Activated T-helper 1 cell treated with anti-CD3 and anti-CD28 coated beads, Interleukin-12 subunit alpha, Interleukin-12 subunit beta, Interleukin-2, Interleukin-4 antibody, amounts not matched to agents 30 ng/mL and 10 ng/mL and 1 ng/mL, durations not matched to agents 14 hours and 24 hours and 36 hours (primary cell): ENCODE measurements at regions of chr20 and their contacts with region 1.

Region 1: GRCh38 chr20:57654363-57654997 is 34.3 kb upstream of the ZBP1 start:
- DNase-seq: peak; percentile 23
- H3K4me3 Mint-ChIP-seq: no peak overlapping the region
- H3K27ac Mint-ChIP-seq: no peak overlapping the region
- H3K4me1 Mint-ChIP-seq: peaks cover 8% of the 10 kb centered on the region
- H3K27me3 Mint-ChIP-seq: peaks cover 2% of the 10 kb centered on the region

Region 2: GRCh38 chr20:58179432-58180099 is 525.1 kb after region 1 on chr20:
- intact Hi-C with region 1: loop called (anchors 1 kb)
- DNase-seq: peak; percentile 57
- H3K4me3 Mint-ChIP-seq: peak overlapping the region; percentile 51
- H3K27ac Mint-ChIP-seq: no peak overlapping the region
- H3K4me1 Mint-ChIP-seq: peaks cover 5% of the 10 kb centered on the region
- H3K27me3 Mint-ChIP-seq: peaks cover 6% of the 10 kb centered on the region